Activated CD8-positive, alpha-beta memory T cell treated with anti-CD3 and anti-CD28 coated beads, Interleukin-2, amount 10 ng/mL, durations not matched to agents 7 days and 5 days (primary cell): ENCODE measurements at regions of chr17 and their contacts with region 1.

Region 1: GRCh38 chr17:7856883-7857723 is at the start of gene NAA38:
- DNase-seq: peak; percentile 99
- ATAC-seq: peak; percentile 88
- H3K4me3 Mint-ChIP-seq: no peak within 1 kb of the TSS
- H3K27ac Mint-ChIP-seq: no peak within 1 kb of the TSS
- H3K4me1 Mint-ChIP-seq: peaks cover 18% of the 10 kb centered on the region
- H3K27me3 Mint-ChIP-seq: no peaks in the 10 kb centered on the region
- total RNA-seq, gene NAA38: 86.0 to 95.8 TPM

Region 2: DNA sequence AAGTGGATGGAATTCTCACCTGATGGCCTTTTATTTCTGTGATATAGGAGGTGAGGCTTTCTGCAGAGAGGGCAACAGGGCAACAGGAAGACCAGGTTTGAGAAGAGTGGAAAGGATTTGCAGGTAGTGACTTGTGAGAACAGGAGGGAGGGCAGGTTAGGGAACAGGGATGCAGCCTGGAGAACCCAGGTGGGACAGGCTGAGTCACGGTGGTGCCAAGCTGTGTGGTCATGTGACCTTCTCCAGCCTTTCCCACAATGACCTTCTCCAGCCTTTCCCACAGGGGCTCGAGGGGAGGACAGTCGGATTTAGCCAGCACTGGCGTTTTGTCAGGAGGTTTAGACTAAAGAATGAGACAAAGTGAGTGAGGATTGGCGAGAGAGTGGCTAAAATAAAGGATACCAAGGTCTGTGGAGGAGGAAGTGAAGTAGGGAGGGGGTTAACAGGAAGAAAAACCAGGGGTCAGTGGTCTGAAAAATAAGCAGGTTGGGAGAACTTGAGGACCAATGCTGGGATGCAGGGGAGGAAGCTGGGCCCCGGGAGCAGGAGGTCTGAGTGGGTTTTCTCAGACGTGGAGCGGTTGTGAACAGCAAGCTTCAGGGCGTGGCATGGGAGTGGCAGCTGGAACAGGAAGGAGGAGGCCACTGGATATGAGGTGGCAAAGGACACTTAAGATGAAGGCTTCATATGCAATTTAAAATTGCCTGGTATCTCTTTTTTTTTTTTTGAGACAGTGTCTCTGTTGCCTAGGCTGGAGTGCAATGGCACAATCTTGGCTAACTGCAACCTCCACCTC is 101.8 kb before region 1 on chr17:
- CTCF ChIA-PET with region 1: no interaction called
- DNase-seq: no peak
- ATAC-seq: no peak
- H3K4me3 Mint-ChIP-seq: no peak overlapping the region
- H3K27ac Mint-ChIP-seq: no peak overlapping the region
- H3K4me1 Mint-ChIP-seq: peaks cover 4% of the 10 kb centered on the region
- H3K27me3 Mint-ChIP-seq: peaks cover 9% of the 10 kb centered on the region

Region 3: DNA sequence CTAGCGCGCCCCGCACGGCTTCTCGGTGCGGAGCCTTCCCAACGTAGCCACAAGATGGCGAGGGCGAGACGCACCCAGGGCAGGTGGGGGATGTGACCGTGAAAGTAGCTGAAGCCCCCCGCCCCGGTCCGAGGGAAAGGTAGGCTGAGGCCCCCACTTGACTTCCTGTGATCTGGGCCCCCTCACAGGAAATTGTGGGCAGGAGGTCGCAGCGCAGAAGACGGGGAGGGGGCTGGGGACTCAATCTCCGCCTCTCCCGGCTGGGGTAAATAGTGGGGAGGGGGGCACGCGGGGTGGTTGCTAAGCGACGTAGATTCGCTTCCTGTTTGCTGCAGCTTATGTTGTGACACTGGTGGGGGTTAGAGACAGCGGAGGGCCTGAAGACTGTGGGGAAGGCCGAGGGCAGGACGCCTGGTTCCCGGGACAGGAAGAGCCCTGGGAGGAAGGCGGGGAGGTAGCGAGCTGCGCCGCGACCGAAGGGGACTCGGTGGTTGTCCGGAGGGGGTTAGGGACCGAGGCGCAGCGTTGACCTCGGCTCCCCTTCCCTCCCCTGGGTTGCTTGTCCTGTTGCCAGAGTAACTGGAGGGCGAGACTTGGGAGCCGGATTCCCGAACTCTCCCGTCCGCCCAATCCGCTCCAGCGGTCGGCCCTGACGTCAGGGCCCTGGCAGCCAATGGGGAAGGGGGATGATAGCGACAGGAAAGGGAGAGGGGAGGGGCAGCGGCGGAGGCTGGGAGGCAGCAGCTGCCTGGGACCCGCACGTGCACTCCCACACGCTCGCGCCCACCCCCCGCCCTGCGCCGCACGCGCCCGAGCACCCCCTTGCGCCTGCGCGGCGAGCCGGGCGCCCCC is 21.9 kb before region 1 on chr17:
- CTCF ChIA-PET with region 1: interaction called, 18 read pairs
- DNase-seq: peak; percentile 91
- ATAC-seq: peak; percentile 60
- H3K4me3 Mint-ChIP-seq: peak overlapping the region; percentile 77
- H3K27ac Mint-ChIP-seq: peak overlapping the region; percentile 84
- H3K4me1 Mint-ChIP-seq: peaks cover 49% of the 10 kb centered on the region
- H3K27me3 Mint-ChIP-seq: peaks cover 13% of the 10 kb centered on the region

Region 4: DNA sequence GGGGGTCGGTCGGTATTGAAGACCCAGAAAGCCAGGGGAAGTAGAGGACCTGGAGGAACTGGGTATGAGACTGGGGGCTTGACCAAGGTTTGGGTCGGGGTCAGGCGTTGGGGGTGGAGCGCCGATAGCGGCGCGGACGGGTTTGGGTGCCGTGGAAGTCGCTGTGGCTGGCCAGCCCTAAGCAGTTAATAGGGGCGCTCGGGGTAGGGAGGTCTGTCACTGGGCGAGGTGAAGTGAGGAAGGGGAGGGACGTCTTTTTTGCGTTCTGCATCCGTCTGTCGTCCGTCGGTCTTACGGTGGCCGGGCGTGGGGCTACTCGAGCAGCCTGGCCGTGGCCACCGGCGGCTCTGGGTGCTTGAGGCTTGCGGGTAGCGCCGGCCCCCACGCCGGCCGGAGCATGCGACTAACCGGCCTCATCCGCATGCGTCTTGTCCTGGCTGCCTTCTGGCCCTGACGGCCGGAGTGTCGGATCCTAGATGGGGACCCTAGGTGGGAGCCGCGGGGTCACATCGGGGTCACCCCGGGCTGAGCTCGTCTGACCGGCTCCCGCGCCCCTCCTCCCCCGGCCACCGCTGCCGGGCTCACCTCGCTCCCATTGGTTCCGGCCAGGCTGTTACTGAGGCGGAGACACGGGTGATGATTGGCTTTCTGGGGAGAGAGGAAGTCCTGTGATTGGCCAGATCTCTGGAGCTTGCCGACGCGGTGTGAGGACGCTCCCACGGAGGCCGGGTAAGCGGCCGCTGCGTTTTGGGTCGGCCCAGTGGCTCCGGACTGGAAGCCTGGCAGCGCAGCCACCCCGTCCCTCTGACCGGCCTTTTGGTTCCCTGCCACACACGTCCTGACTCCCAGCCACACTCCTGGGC is 12.6 kb before region 1 on chr17:
- CTCF ChIA-PET with region 1: interaction called, 11 read pairs
- DNase-seq: peak; percentile 93
- ATAC-seq: peak; percentile 73
- H3K4me3 Mint-ChIP-seq: peak overlapping the region; percentile 80
- H3K27ac Mint-ChIP-seq: peak overlapping the region; percentile 99
- H3K4me1 Mint-ChIP-seq: peaks cover 34% of the 10 kb centered on the region
- H3K27me3 Mint-ChIP-seq: no peaks in the 10 kb centered on the region

Region 5: GRCh38 chr17:7867881-7868329 is 10.8 kb after region 1 on chr17:
- CTCF ChIA-PET with region 1: interaction called, 37 read pairs
- DNase-seq: peak; percentile 64
- ATAC-seq: peak; percentile 91
- H3K4me3 Mint-ChIP-seq: peak overlapping the region; percentile 49
- H3K27ac Mint-ChIP-seq: peak overlapping the region; percentile 81
- H3K4me1 Mint-ChIP-seq: peaks cover 29% of the 10 kb centered on the region
- H3K27me3 Mint-ChIP-seq: no peaks in the 10 kb centered on the region

Region 6: DNA sequence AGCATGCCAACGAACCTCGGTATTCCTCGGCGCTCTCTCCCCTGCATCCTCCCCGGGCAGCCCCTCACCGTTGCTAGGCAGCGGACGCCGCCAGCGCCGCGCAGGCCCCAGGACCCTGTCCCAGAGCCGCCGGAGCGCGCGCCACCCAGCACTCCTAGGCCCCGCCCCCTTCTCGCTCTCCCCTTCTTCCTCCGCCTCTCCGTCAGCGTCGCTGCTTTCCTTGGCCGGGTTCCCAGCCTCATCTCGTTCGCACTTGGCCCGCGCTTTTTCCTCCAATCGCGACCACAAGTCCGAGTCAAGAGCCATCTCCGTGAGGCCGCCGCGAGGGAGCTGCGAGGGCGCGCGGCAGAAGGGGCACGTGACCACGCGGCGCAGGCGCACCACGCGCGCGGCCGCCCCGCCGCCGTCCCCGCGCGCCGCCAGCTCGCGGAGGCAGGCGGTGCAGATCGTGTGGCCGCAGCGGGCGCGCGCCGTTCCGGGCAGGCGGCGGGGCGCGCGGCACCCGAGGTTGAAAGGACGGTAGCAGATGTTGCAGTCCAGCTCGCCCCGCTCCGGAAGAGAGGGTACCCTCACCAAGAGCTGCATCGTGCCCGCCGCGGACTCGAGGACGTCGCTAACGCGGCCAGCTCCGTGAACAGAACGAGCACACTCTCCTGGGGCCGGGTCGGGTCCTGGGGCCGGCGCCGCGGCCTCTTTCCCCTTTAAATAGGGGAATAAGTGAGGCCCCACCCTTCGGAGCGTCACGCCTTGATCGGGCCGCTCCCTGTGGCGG is 58.7 kb after region 1 on chr17 and contains the start of gene RNF227:
- CTCF ChIA-PET with region 1: interaction called, 14 read pairs
- DNase-seq: peak; percentile 89
- ATAC-seq: peak; percentile 87
- H3K4me3 Mint-ChIP-seq: peak within 1 kb of the TSS; percentile 87
- H3K27ac Mint-ChIP-seq: peak within 1 kb of the TSS; percentile 94
- H3K4me1 Mint-ChIP-seq: peaks cover 28% of the 10 kb centered on the region
- H3K27me3 Mint-ChIP-seq: no peaks in the 10 kb centered on the region
- total RNA-seq, gene RNF227: 2.8 to 3.9 TPM

Region 7: DNA sequence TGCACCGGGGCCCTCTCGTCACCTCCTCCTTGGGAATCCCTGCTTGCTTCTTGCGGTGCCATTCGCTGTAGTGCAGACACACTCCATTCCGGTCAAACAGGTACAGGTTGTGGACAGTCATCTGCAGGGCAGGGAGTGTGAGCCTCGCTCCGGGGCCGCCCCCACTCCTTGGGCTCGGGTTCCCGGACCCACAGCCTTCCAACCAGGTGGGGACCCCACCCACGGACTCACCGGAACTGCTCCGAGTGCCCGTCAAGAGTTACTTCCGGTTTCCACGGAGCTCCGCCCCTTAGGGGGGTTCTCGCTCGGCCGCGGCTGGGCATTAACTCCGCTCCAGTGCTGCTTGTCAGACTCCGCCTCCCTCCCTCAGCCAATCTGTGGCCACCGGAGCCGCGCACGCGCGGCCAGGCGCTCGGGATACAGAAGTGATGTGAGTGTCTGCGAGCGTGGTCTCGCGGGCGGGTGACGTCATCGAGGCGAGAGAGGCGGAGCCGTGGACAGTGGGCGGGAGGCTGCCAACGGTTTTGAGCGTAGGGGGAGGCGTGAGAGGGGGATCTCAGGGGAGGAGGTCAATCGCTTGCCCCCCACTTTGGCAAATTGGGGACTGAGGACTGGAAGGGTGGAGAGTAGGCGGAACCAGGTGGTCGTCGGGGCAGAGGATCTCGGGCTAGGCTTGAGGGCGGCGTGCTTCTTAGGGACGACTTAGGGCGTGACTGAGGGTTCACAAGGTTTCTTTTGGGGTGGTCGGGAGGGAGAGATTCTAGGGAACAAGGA is 74.8 kb after region 1 on chr17 and contains the starts of genes CNTROB and TRAPPC1:
- CTCF ChIA-PET with region 1: interaction called, 10 read pairs
- DNase-seq: peak; percentile 100
- ATAC-seq: peak; percentile 97
- H3K4me3 Mint-ChIP-seq: peak within 1 kb of the TSS; percentile 97
- H3K27ac Mint-ChIP-seq: peak within 1 kb of the TSS; percentile 97
- H3K4me1 Mint-ChIP-seq: peaks cover 54% of the 10 kb centered on the region
- H3K27me3 Mint-ChIP-seq: no peaks in the 10 kb centered on the region
- total RNA-seq, gene CNTROB: 56.8 to 69.2 TPM
- total RNA-seq, gene TRAPPC1: 216 to 245 TPM